CD4-positive, alpha-beta memory T cell (primary cell): ENCODE measurements at regions of chr1 and their contacts with region 1.

Region 1: GRCh38 chr1:225881969-225882693 is at the start of gene TMEM63A:
- DNase-seq: peak; percentile 86 to 92 (median 88)
- H3K4me3 ChIP-seq: peak within 1 kb of the TSS; percentile 89 to 98
- H3K4me3 Mint-ChIP-seq: peak within 1 kb of the TSS; percentile 95 to 99 (median 98)
- H3K27ac ChIP-seq: peak within 1 kb of the TSS; percentile 84
- H3K27ac Mint-ChIP-seq: peak within 1 kb of the TSS; percentile 93 to 97 (median 96)
- H3K4me1 ChIP-seq: peaks cover 48% of the 10 kb centered on the region
- H3K4me1 Mint-ChIP-seq: peaks cover 37 to 57% (median 46%) of the 10 kb centered on the region in 4 donors
- H3K27me3 ChIP-seq: no peaks in the 10 kb centered on the region
- H3K27me3 Mint-ChIP-seq: no peaks in the 10 kb centered on the region
- total RNA-seq, gene TMEM63A: 476 to 507 TPM

Region 2: GRCh38 chr1:225710804-225711203 is 171.3 kb before region 1 on chr1:
- CTCF ChIA-PET with region 1: no interaction called
- POLR2A ChIA-PET with region 1: no interaction called
- intact Hi-C with region 1: no loop called
- DNase-seq: no peak
- H3K4me3 ChIP-seq: no peak overlapping the region
- H3K4me3 Mint-ChIP-seq: no peak overlapping the region
- H3K27ac ChIP-seq: no peak overlapping the region
- H3K27ac Mint-ChIP-seq: peak overlapping the region in 1 of 7 donors; percentile 14
- H3K4me1 ChIP-seq: no peaks in the 10 kb centered on the region
- H3K4me1 Mint-ChIP-seq: no peaks in the 10 kb centered on the region
- H3K27me3 ChIP-seq: no peaks in the 10 kb centered on the region
- H3K27me3 Mint-ChIP-seq: peaks cover 0 to 4% of the 10 kb centered on the region in 2 donors

Region 3: DNA sequence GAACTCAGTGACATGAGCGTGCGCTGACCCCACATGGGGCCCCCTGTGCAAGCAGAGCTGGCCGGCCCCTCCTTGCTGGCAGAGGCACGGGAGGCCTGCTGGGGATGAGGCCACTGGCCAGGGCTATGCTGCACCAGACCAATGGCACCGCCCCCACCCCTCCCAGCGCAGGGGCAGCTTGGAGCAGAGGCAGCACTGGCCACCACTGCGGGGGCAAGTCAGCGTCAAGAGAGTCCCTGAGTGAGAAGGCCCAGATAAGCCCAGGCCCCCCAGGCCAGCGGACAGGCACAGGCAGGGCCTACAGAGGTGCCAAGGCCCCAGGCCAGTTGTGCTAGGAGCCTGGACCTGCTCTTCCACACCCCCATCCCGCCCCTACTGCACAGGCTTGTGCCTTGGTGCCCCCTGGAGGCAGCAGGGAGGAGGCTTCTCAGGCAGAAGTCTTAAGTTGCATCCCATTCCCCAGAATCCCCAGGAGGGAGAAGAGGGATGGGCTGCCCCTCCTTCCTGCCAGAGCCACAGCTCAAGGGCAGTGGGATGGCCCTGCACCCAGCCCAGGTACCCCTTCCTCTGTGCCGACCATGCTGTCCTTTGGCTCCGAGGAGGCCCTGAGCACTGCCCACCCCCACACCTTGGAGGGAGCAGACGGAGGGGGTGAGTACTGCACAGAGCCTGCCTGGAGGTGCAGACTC is 36.4 kb before region 1 on chr1:
- CTCF ChIA-PET with region 1: interaction called, 6 read pairs
- POLR2A ChIA-PET with region 1: interaction called, 39 read pairs
- intact Hi-C with region 1: loop called (anchors 5 kb)
- DNase-seq: peak in 3 of 5 donors; percentile 33 to 40 (median 33)
- H3K4me3 ChIP-seq: no peak overlapping the region
- H3K4me3 Mint-ChIP-seq: peak overlapping the region in 1 of 8 donors; percentile 36
- H3K27ac ChIP-seq: no peak overlapping the region
- H3K27ac Mint-ChIP-seq: no peak overlapping the region
- H3K4me1 ChIP-seq: peaks cover 41% of the 10 kb centered on the region
- H3K4me1 Mint-ChIP-seq: peaks cover 25 to 57% (median 38%) of the 10 kb centered on the region in 4 donors
- H3K27me3 ChIP-seq: no peaks in the 10 kb centered on the region
- H3K27me3 Mint-ChIP-seq: no peaks in the 10 kb centered on the region

Region 4: GRCh38 chr1:225855503-225856300 is 26.4 kb before region 1 on chr1:
- CTCF ChIA-PET with region 1: interaction called, 7 read pairs
- POLR2A ChIA-PET with region 1: interaction called, 42 read pairs
- intact Hi-C with region 1: no loop called
- DNase-seq: no peak
- H3K4me3 ChIP-seq: no peak overlapping the region
- H3K4me3 Mint-ChIP-seq: peak overlapping the region in 1 of 8 donors; percentile 22
- H3K27ac ChIP-seq: no peak overlapping the region
- H3K27ac Mint-ChIP-seq: peak overlapping the region; percentile 9 to 74 (median 57)
- H3K4me1 ChIP-seq: peaks cover 10% of the 10 kb centered on the region
- H3K4me1 Mint-ChIP-seq: peaks cover 19 to 61% (median 32%) of the 10 kb centered on the region in 4 donors
- H3K27me3 ChIP-seq: no peaks in the 10 kb centered on the region
- H3K27me3 Mint-ChIP-seq: no peaks in the 10 kb centered on the region

Region 5: GRCh38 chr1:225866061-225866837 is 15.9 kb before region 1 on chr1:
- CTCF ChIA-PET with region 1: interaction called, 22 read pairs
- POLR2A ChIA-PET with region 1: interaction called, 74 read pairs
- intact Hi-C with region 1: loop called (anchors 1 kb)
- DNase-seq: peak; percentile 69 to 89 (median 73)
- H3K4me3 ChIP-seq: no peak overlapping the region
- H3K4me3 Mint-ChIP-seq: peak overlapping the region in 7 of 8 donors; percentile 58 to 85 (median 76)
- H3K27ac ChIP-seq: peak overlapping the region; percentile 52
- H3K27ac Mint-ChIP-seq: peak overlapping the region; percentile 85 to 95 (median 90)
- H3K4me1 ChIP-seq: peaks cover 42% of the 10 kb centered on the region
- H3K4me1 Mint-ChIP-seq: peaks cover 31 to 60% (median 44%) of the 10 kb centered on the region in 4 donors
- H3K27me3 ChIP-seq: no peaks in the 10 kb centered on the region
- H3K27me3 Mint-ChIP-seq: no peaks in the 10 kb centered on the region

Region 6: GRCh38 chr1:225896937-225897549 is 14.9 kb after region 1 on chr1:
- CTCF ChIA-PET with region 1: interaction called, 294 read pairs
- POLR2A ChIA-PET with region 1: interaction called, 730 read pairs
- intact Hi-C with region 1: loop called (anchors 1 kb)
- DNase-seq: peak; percentile 87 to 92 (median 88)
- H3K4me3 ChIP-seq: peak overlapping the region in 1 of 2 donors; percentile 13
- H3K4me3 Mint-ChIP-seq: peak overlapping the region; percentile 72 to 92 (median 82)
- H3K27ac ChIP-seq: peak overlapping the region; percentile 72
- H3K27ac Mint-ChIP-seq: peak overlapping the region; percentile 94 to 99 (median 98)
- H3K4me1 ChIP-seq: peaks cover 45% of the 10 kb centered on the region
- H3K4me1 Mint-ChIP-seq: peaks cover 34 to 65% (median 46%) of the 10 kb centered on the region in 4 donors
- H3K27me3 ChIP-seq: no peaks in the 10 kb centered on the region
- H3K27me3 Mint-ChIP-seq: no peaks in the 10 kb centered on the region

Region 7: DNA sequence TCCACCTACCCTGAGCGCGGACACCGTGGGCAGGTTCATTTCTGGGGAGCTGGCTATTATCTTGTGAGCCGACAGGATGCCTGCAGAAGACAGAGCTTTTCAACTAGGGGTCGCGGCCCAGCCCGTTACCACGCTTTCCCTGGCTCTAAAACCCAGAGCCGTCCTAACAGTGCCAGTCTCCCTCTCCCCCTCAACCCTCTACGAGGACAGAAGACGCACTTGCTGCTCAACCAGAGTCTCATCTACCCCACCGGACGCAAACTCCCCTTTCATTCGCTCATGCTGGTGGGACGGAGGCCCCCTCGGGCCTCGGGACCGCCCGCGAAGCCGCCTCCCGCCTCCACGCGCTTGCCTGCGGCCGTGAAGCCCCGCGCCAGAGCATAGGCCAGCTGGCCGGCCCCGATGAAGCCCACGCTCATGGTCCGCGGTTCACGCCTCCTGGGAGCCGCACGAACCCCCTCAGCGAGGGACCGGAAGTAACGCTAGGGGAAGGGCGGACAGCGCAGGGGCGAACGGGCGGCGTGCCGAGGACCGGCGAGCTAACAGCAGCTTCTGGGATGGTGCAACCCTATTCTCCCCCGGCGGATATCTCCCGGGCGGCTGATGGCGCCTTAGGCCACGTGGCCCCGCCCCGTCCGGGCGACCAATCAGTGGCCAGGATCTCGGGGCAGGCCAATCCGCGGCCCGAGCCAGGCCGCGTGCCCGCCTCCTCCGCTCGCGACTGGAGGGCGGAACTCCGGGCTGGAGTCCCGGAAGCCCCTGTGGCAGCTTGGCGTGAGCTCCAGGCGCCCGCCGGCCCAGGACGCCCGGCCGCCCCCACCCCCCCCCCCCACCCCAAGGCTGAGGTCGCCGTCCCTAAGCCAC is 41.8 kb after region 1 on chr1 and contains the start of gene PYCR2:
- CTCF ChIA-PET with region 1: interaction called, 6 read pairs
- POLR2A ChIA-PET with region 1: interaction called, 64 read pairs
- intact Hi-C with region 1: no loop called
- DNase-seq: peak; percentile 93 to 96 (median 95)
- H3K4me3 ChIP-seq: peak within 1 kb of the TSS; percentile 94 to 96
- H3K4me3 Mint-ChIP-seq: peak within 1 kb of the TSS; percentile 90 to 97 (median 94)
- H3K27ac ChIP-seq: peak within 1 kb of the TSS; percentile 85
- H3K27ac Mint-ChIP-seq: peak within 1 kb of the TSS; percentile 90 to 97 (median 95)
- H3K4me1 ChIP-seq: peaks cover 68% of the 10 kb centered on the region
- H3K4me1 Mint-ChIP-seq: peaks cover 13 to 52% (median 28%) of the 10 kb centered on the region in 4 donors
- H3K27me3 ChIP-seq: no peaks in the 10 kb centered on the region
- H3K27me3 Mint-ChIP-seq: no peaks in the 10 kb centered on the region
- total RNA-seq, gene PYCR2: 102 to 116 TPM